ENCODE measurements at regions of chr1 and their contacts with region 1.

Region 1: DNA sequence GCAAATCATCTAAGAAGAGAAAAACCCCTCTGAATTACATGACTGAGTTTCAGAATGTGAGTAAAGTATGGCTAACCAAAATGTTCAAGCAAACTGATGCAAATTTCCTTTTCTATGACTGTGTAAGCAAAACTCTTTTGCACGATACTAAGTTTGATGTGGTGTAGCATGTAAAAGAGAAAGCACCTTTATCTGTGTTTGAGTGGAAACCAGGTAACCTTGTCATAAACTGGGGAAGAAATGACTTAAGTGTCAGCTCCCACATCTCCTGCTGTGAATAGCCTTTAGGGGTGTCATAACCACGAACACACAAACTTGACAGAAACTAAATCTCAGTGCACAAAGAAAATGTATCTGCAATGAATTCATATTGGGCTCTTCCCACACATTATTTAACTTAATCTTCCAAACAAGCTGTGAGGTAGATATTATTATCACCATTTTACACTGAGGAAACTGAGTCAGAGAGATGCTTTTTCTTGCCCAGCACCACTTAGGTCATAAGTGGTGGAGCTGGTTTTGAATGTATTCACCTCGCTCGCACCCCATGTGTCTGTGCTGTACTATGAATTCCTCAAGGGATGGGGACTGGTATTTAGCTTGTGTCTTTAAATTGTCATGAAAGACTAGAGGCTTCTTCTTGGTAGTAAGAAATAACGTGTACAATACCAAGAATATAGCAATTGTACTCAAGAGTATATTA is 32.9 kb upstream of the IL12RB2 start:
- DNase-seq: peak; percentile 54
- H3K4me3 Mint-ChIP-seq: no peak overlapping the region
- H3K27ac Mint-ChIP-seq: peak overlapping the region; percentile 80
- H3K4me1 Mint-ChIP-seq: peaks cover 68% of the 10 kb centered on the region
- H3K27me3 Mint-ChIP-seq: no peaks in the 10 kb centered on the region

Region 2: GRCh38 chr1:67162957-67163356 is 111.8 kb before region 1 on chr1:
- intact Hi-C with region 1: loop called (anchors 1 kb)
- DNase-seq: peak; percentile 62
- H3K4me3 Mint-ChIP-seq: peak overlapping the region; percentile 55
- H3K27ac Mint-ChIP-seq: peak overlapping the region; percentile 93
- H3K4me1 Mint-ChIP-seq: peaks cover 65% of the 10 kb centered on the region
- H3K27me3 Mint-ChIP-seq: no peaks in the 10 kb centered on the region

Region 3: GRCh38 chr1:67194209-67194863 is 80.4 kb before region 1 on chr1:
- intact Hi-C with region 1: loop called (anchors 1 kb)
- DNase-seq: no peak
- H3K4me3 Mint-ChIP-seq: no peak overlapping the region
- H3K27ac Mint-ChIP-seq: no peak overlapping the region
- H3K4me1 Mint-ChIP-seq: peaks cover 38% of the 10 kb centered on the region
- H3K27me3 Mint-ChIP-seq: no peaks in the 10 kb centered on the region

Region 4: GRCh38 chr1:67228791-67229190 is 46.0 kb before region 1 on chr1:
- intact Hi-C with region 1: no loop called
- DNase-seq: no peak
- H3K4me3 Mint-ChIP-seq: no peak overlapping the region
- H3K27ac Mint-ChIP-seq: no peak overlapping the region
- H3K4me1 Mint-ChIP-seq: peaks cover 23% of the 10 kb centered on the region
- H3K27me3 Mint-ChIP-seq: no peaks in the 10 kb centered on the region

Region 5: DNA sequence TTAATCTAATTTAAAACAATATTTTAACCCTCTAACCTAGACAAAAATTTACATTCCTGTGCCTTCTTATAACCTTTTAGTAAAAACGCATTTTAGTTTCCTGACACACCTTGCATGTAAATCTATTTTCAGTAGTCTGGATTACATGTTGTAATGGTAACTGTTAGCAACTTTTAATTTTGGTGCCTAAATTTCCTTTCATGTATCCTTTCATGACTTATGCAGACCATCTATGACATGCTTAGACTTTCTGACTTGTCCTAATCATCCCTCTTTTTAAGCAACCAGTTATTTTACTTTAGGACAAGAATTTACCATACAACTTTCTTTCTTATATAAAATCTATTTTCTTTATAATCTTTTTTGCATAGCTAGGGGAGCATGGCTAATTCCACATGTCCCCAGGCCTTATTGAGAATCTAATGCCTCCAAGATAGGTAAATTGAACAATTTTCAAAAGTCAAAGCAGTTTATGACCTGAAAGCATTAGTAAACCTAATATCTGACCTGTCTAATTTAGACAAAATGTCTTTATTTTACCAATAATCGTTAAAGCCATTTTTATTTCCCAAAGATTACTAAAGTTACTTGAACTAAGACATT is 24.6 kb before region 1 on chr1:
- intact Hi-C with region 1: no loop called
- DNase-seq: no peak
- H3K4me3 Mint-ChIP-seq: no peak overlapping the region
- H3K27ac Mint-ChIP-seq: no peak overlapping the region
- H3K4me1 Mint-ChIP-seq: no peaks in the 10 kb centered on the region
- H3K27me3 Mint-ChIP-seq: no peaks in the 10 kb centered on the region

Region 6: GRCh38 chr1:67261680-67262079 is 13.1 kb before region 1 on chr1:
- intact Hi-C with region 1: loop called (anchors 1 kb)
- DNase-seq: peak; percentile 38
- H3K4me3 Mint-ChIP-seq: no peak overlapping the region
- H3K27ac Mint-ChIP-seq: peak overlapping the region; percentile 78
- H3K4me1 Mint-ChIP-seq: peaks cover 47% of the 10 kb centered on the region
- H3K27me3 Mint-ChIP-seq: no peaks in the 10 kb centered on the region

Region 7: GRCh38 chr1:67294836-67295617 is 20.3 kb after region 1 on chr1:
- intact Hi-C with region 1: loop called (anchors 2 kb)
- DNase-seq: no peak
- H3K4me3 Mint-ChIP-seq: peak overlapping the region; percentile 77
- H3K27ac Mint-ChIP-seq: peak overlapping the region; percentile 98
- H3K4me1 Mint-ChIP-seq: peaks cover 73% of the 10 kb centered on the region
- H3K27me3 Mint-ChIP-seq: no peaks in the 10 kb centered on the region

Region 8: DNA sequence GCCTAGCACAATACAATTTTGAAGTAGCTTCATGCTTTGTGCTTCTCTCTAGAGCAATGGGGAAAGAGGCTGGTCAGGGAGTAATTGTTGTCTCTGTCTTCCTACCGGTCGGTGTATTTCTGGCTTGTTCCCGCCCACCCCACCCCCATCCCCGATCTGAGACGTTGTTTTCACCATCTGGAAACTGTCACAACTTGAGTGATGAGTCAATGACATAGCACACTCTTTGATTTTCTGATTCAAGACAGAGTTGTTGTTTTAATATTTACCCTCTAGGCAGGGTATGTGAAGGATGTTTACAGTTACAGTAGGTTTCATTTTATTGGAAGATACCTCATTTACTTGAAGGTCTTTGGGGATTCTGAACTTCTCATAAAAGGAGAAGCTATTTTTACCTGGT is 39.9 kb after region 1 on chr1:
- intact Hi-C with region 1: loop called (anchors 2 kb)
- DNase-seq: no peak
- H3K4me3 Mint-ChIP-seq: peak overlapping the region; percentile 100
- H3K27ac Mint-ChIP-seq: peak overlapping the region; percentile 97
- H3K4me1 Mint-ChIP-seq: peaks cover 6% of the 10 kb centered on the region
- H3K27me3 Mint-ChIP-seq: no peaks in the 10 kb centered on the region

Region 9: DNA sequence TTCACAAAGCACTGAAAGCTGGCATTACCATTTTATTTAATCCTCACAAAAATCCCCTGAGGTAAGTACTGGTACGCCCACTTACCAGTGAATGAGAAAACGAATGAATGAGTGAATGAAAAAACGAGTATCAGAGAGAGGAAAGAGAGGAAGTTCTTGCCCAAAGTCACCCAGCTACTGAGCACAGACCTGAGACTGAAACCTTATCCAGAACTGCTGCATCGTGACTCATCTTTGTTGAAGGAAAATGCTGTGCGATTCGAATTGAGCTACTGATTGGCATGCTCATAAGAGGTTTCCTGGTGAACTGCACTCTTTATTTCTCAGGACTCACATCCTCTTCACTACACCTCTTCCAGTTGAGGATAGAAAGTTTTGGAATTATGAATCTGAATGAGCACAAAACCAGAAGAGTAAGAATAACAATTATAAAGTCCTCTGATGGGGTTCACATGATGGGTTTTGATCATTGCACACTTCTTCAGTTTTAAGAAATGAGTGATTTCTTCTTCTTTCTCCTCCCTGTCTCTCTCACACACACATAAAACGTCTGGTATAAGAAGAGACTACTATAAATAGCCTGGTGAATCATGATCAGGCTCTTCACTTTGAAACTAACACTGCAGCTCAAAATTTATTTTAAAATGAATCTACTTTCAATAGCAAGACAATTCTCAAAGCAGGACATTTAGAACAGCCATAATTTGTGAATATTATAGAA is 65.0 kb after region 1 on chr1:
- intact Hi-C with region 1: loop called (anchors 1 kb)
- DNase-seq: peak; percentile 47
- H3K4me3 Mint-ChIP-seq: peak overlapping the region; percentile 66
- H3K27ac Mint-ChIP-seq: peak overlapping the region; percentile 90
- H3K4me1 Mint-ChIP-seq: peaks cover 80% of the 10 kb centered on the region
- H3K27me3 Mint-ChIP-seq: no peaks in the 10 kb centered on the region

Measured in activated T-helper 1 cell treated with anti-CD3 and anti-CD28 coated beads, Interleukin-12 subunit alpha, Interleukin-12 subunit beta, Interleukin-2, Interleukin-4 antibody, amounts not matched to agents 30 ng/mL and 10 ng/mL and 1 ng/mL, durations not matched to agents 14 hours and 24 hours and 36 hours (primary cell).